Activated B cell treated with CpG ODN at 0.5 μM for 24 hours (primary cell): ENCODE measurements at regions of chrX and their contacts with region 1.

Region 1: DNA sequence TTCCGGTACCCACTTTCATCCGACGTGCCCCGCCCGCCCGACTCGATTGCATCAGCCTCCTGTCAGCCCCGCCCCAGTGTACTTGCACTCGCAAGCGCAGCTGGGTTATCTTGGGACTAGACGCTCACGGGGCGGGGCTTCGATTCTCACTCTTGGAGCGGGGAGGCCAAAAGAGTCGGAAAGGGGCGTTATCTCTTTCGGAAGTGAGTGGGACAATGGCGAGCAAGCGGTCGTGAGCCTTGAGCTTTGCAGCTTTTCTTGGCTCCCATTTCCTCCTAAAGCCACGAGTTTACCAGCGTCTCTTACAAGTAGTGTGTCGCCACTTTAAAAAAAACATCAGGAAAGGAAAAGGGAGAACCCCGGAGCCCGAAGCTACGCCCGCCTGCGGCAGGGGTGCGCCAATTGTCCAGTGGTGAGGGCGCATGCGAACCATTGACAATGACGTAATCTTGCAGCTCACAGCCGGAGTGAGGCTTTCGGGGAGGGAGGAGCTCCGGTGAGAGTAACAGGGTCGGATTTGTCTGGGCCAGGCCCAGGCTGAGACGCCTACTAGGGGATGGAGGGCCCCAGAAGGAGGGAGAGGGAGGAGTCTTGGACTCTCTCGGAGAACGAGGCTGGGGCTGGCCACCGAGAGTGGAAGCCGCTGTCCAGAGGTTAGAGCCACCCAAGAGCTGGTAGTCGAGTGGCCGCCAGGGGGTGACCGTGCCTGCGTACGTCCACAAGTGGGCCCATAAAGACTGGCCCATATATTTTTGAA is 109.5 kb downstream of the GNL3L start:
- DNase-seq: peak; percentile 76
- ATAC-seq: peak; percentile 88
- H3K4me3 Mint-ChIP-seq: peak overlapping the region; percentile 97
- H3K27ac Mint-ChIP-seq: peak overlapping the region; percentile 100
- H3K4me1 Mint-ChIP-seq: peaks cover 6% of the 10 kb centered on the region
- H3K27me3 Mint-ChIP-seq: no peaks in the 10 kb centered on the region
- CTCF ChIP-seq: no peak

Region 2: GRCh38 chrX:53422086-53422860 is 1217.3 kb before region 1 on chrX and contains the start of gene SMC1A:
- CTCF ChIA-PET with region 1: no interaction called
- POLR2A ChIA-PET with region 1: no interaction called
- intact Hi-C with region 1: loop called (anchors 1 kb)
- DNase-seq: peak; percentile 79
- ATAC-seq: peak; percentile 89
- H3K4me3 Mint-ChIP-seq: peak within 1 kb of the TSS; percentile 92
- H3K27ac Mint-ChIP-seq: peak within 1 kb of the TSS; percentile 96
- H3K4me1 Mint-ChIP-seq: peaks cover 29% of the 10 kb centered on the region
- H3K27me3 Mint-ChIP-seq: no peaks in the 10 kb centered on the region
- CTCF ChIP-seq: no peak
- total RNA-seq, gene SMC1A: 75.8 and 84.0 TPM in 2 replicates

Region 3: GRCh38 chrX:54182864-54183608 is 456.5 kb before region 1 on chrX and contains the start of gene FAM120C:
- CTCF ChIA-PET with region 1: no interaction called
- POLR2A ChIA-PET with region 1: interaction called, 3 read pairs
- intact Hi-C with region 1: loop called (anchors 1 kb)
- DNase-seq: peak; percentile 41
- ATAC-seq: peak; percentile 79
- H3K4me3 Mint-ChIP-seq: peak within 1 kb of the TSS; percentile 83
- H3K27ac Mint-ChIP-seq: peak within 1 kb of the TSS; percentile 85
- H3K4me1 Mint-ChIP-seq: peaks cover 41% of the 10 kb centered on the region
- H3K27me3 Mint-ChIP-seq: no peaks in the 10 kb centered on the region
- CTCF ChIP-seq: no peak
- total RNA-seq, gene FAM120C: 14.0 and 20.2 TPM in 2 replicates

Region 4: DNA sequence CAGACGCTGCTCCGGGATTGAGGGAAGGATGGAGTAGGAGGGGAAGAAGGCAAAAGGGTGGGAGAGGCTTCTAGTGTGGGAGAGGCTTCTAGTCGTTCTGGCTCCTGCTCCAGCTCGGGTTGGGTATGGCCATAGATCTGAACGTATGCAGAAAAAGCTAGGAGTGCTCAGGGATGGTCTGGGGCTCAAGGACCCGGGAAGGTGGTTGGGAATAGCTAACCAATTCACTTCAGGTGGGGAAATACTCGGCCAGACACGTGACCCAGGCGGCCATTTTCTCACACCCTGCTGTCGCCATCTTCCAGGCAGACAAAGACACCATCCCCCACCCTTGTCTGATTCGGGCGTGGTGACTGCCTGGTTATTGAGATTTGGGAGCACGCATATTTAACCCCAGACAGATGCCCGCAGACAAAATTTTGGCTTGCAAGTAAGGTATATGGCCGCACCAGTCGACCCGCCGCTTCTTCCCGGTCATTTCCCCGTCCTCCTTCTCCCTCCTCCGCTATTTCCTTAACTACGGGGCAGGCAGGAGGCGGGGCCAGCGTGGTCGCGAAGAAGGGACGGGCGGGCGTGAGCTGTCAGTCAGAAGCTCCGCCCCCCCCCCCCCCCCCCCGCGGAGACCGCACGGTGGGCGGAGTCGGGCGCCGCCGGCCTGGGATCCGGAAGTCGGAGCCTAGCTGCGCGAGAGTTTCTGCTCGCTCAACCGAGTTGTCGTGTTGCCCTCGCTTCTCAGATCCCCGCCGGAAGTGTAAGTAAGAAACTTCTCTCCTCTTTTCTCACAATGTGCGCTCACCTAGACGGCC is 109.8 kb before region 1 on chrX and contains the start of gene GNL3L:
- CTCF ChIA-PET with region 1: no interaction called
- POLR2A ChIA-PET with region 1: interaction called, 35 read pairs
- intact Hi-C with region 1: loop called (anchors 1 kb)
- DNase-seq: peak; percentile 66
- ATAC-seq: peak; percentile 83
- H3K4me3 Mint-ChIP-seq: peak within 1 kb of the TSS; percentile 94
- H3K27ac Mint-ChIP-seq: peak within 1 kb of the TSS; percentile 97
- H3K4me1 Mint-ChIP-seq: peaks cover 43% of the 10 kb centered on the region
- H3K27me3 Mint-ChIP-seq: no peaks in the 10 kb centered on the region
- CTCF ChIP-seq: no peak
- total RNA-seq, gene GNL3L: 67.1 and 70.5 TPM in 2 replicates

Region 5: GRCh38 chrX:54786962-54787361 is 147.4 kb after region 1 on chrX:
- CTCF ChIA-PET with region 1: interaction called, 5 read pairs
- POLR2A ChIA-PET with region 1: no interaction called
- intact Hi-C with region 1: loop called (anchors 1 kb)
- DNase-seq: no peak
- ATAC-seq: peak; percentile 58
- H3K4me3 Mint-ChIP-seq: no peak overlapping the region
- H3K27ac Mint-ChIP-seq: no peak overlapping the region
- H3K4me1 Mint-ChIP-seq: no peaks in the 10 kb centered on the region
- H3K27me3 Mint-ChIP-seq: no peaks in the 10 kb centered on the region
- CTCF ChIP-seq: no peak

Region 6: DNA sequence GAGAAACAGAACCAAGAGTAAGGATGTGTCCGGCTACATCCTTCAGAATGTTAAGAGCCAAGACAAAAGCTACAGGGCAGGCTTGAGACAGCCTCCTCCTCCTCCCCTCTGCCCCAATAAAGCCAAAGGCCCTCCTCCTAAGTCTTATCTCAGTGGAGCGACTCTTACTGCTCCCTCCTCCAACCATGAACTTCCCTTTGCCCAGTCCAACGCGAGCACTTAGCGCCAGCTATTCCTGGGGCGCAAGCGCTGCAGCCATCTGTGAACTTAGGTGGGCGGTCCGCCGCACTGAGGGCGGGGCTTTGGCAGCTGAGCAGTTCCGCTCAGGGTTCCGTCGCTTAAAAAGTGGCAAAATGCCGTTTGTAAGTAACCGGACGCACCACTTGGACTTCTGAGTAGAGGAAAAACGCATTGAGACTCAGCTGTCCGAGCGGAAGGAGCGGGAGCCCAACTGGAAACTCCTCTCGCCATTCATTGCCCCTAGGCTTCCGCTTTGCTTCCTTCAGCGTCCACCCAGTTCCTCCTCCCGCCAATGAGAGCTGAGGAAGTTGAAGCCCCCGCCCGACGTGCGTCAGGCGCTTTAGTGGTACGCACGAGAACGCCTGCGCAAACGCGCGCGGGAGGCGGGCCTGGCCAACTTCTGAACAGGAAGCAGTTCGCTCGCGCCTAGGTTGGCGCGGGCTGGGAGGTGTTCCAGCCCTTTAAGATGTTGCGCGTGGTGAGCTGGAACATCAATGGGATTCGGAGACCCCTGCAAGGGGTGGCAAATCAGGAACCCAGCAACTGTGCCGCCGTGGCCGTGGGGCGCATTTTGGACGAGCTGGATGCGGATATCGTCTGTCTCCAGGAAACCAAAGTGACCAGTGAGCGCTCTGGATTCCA is 360.4 kb after region 1 on chrX and contains the start of gene APEX2:
- CTCF ChIA-PET with region 1: interaction called, 4 read pairs
- POLR2A ChIA-PET with region 1: interaction called, 33 read pairs
- intact Hi-C with region 1: loop called (anchors 1 kb)
- DNase-seq: peak; percentile 74
- ATAC-seq: peak; percentile 95
- H3K4me3 Mint-ChIP-seq: peak within 1 kb of the TSS; percentile 94
- H3K27ac Mint-ChIP-seq: peak within 1 kb of the TSS; percentile 89
- H3K4me1 Mint-ChIP-seq: peaks cover 19% of the 10 kb centered on the region
- H3K27me3 Mint-ChIP-seq: no peaks in the 10 kb centered on the region
- CTCF ChIP-seq: no peak
- total RNA-seq, gene APEX2: 19.6 and 22.2 TPM in 2 replicates